CD8-positive, alpha-beta T cell (primary cell): ENCODE measurements at regions of chr12 and their contacts with region 1.

Region 1: DNA sequence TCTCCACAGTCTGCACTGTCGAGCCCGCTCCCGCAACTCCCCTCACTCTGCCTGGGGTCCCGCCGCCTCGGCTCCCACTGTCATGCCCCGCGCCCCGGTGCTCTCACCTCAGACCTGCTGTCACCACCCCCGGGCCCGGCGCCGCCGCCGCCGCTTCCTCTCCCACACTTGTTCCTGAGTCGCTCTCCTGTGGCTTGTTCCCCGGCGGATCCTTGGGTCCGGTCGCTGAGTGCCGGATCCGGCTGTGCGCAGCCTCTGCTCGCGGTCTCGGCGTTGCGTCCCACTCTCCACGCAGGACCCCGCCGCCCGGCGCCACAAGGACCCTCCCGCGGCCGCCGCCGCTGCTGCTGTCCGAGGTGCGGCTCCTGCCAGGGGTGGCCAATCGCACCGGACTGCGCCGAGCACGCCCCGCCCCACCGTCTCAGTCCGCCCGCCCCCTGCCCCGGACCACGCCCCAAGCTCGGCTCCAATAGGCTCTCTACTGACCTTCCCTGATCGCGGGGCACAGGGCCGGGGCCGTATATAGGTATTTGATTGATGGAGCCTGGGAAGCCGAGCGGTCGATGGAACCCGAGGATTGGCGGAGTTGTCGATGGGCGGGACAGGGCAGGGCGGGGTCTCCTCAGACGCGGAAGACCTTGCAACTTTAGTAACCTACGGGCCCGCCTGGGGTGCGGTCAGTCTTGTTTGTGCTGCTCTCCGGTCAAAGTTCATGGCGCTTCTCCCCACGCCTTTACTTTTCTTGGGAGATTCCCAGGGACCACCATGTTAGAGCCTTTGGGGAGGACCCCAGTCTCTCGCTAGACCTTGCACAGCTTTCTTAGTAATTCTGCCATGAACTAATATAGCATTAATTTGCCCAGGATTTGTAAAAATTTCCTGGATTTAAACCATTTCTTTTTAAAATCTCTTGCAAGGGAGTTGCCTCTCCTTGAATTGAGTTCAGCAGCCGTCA is at the start of gene TAOK3:
- DNase-seq: peak; percentile 94 to 99 (median 96)
- ATAC-seq: peak; percentile 85
- H3K4me3 ChIP-seq: peak within 1 kb of the TSS; percentile 85 to 89
- H3K4me3 Mint-ChIP-seq: peak within 1 kb of the TSS; percentile 92
- H3K27ac ChIP-seq: peak within 1 kb of the TSS; percentile 67 to 73
- H3K27ac Mint-ChIP-seq: peak within 1 kb of the TSS; percentile 95
- H3K4me1 ChIP-seq: peaks cover 31% of the 10 kb centered on the region
- H3K4me1 Mint-ChIP-seq: peaks cover 54% of the 10 kb centered on the region
- H3K27me3 ChIP-seq: no peaks in the 10 kb centered on the region
- H3K27me3 Mint-ChIP-seq: no peaks in the 10 kb centered on the region
- CTCF ChIP-seq: no peak
- total RNA-seq, gene TAOK3: 46.5 to 47.3 TPM

Region 2: GRCh38 chr12:117190210-117190781 is 1182.5 kb before region 1 on chr12 and contains the start of gene FBXO21:
- CTCF ChIA-PET with region 1: no interaction called
- POLR2A ChIA-PET with region 1: no interaction called
- intact Hi-C with region 1: loop called in 1 of 2 experiments (anchors 5 kb)
- DNase-seq: peak; percentile 90 to 98 (median 93)
- ATAC-seq: peak; percentile 96
- H3K4me3 ChIP-seq: peak within 1 kb of the TSS; percentile 49 to 87
- H3K4me3 Mint-ChIP-seq: peak within 1 kb of the TSS; percentile 93
- H3K27ac ChIP-seq: peak within 1 kb of the TSS; percentile 69 to 83
- H3K27ac Mint-ChIP-seq: peak within 1 kb of the TSS; percentile 92
- H3K4me1 ChIP-seq: peaks cover 22% of the 10 kb centered on the region
- H3K4me1 Mint-ChIP-seq: peaks cover 31% of the 10 kb centered on the region
- H3K27me3 ChIP-seq: no peaks in the 10 kb centered on the region
- H3K27me3 Mint-ChIP-seq: no peaks in the 10 kb centered on the region
- CTCF ChIP-seq: no peak
- total RNA-seq, gene FBXO21: 77.7 to 87.7 TPM

Region 3: DNA sequence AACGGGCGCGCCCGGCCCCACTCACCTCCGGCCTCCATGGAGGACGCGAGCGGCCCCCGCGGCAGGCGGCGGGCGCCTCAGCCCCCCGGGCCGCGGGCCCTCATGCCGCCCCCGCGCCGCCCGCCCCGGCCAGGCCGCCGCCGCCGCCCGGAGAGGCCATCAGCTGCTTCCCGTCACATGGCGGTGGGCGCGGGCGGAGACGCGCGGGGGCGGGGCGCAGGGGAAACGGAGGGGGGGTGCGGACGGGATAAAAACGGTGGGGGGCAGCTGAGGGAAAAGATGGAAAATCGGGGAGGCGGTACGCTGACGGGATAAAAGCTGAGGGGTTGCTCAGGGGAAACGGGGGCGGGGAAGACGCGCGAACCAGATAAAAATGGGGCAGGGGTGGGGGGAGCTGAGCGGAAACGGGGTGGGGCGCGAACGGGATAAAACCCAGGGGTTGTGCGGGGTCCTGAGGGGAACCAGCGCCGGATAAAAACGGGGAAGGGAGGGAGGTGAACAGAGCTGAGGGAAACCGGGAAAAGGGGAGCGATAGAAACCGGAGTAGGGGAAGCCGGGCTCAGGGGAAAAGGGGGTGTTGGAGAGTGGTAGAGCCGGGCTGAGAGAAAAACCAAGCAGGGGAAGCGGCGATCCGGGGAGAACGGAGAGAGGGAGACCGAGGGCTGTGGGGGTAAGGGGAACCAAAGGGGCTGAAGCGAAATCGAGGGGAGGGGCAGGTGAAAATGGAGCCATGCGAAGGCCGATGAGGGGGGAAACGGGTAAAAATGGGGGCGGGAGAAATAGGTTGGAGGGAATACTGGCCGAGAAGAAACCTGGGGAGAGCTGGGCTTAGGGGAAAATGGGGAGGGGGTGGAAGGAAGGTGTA is 311.6 kb before region 1 on chr12 and contains the start of gene WSB2:
- CTCF ChIA-PET with region 1: interaction called, 10 read pairs
- POLR2A ChIA-PET with region 1: interaction called, 6 read pairs
- intact Hi-C with region 1: loop called (anchors 1 to 2 kb)
- DNase-seq: peak; percentile 5 to 69 (median 50)
- ATAC-seq: peak; percentile 43
- H3K4me3 ChIP-seq: peak within 1 kb of the TSS; percentile 72 to 86
- H3K4me3 Mint-ChIP-seq: peak within 1 kb of the TSS; percentile 93
- H3K27ac ChIP-seq: peak within 1 kb of the TSS; percentile 67 to 92
- H3K27ac Mint-ChIP-seq: peak within 1 kb of the TSS; percentile 98
- H3K4me1 ChIP-seq: peaks cover 40% of the 10 kb centered on the region
- H3K4me1 Mint-ChIP-seq: peaks cover 57% of the 10 kb centered on the region
- H3K27me3 ChIP-seq: peaks cover 0 to 2% of the 10 kb centered on the region in 2 experiments
- H3K27me3 Mint-ChIP-seq: no peaks in the 10 kb centered on the region
- CTCF ChIP-seq: no peak
- total RNA-seq, gene WSB2: 16.4 to 19.5 TPM

Region 4: DNA sequence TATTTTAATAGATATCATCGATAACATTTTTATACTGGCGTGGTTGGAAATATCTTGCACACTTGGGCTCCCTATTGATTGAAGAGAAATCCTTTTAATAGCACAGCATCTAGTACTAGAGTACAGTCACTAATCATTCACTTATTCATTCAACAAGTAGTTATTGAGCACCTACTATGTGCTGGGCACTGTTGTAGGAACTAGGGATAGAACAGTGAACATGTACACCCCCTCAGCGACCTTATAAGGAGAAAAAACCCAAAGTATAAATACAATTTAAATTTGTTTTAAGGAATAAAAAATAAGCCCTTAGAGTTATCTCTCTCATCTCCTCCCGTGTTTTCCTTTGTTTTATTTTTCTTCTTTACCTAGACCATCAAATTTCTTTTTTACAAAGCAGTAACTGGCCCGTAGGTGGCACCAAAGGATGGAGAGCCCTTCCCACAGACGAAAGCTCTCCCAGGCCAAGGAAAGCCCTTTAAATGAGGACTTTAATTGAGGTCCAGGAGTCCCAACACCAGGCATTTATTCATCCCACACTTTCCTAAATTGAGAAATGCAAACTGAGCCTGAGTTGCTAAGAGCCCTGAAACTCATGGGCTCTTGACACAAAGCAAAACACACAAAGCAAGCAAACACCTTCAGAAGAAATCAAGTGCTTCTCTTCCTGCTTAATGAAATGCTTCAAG is 207.9 kb before region 1 on chr12:
- CTCF ChIA-PET with region 1: interaction called, 13 read pairs
- POLR2A ChIA-PET with region 1: no interaction called
- intact Hi-C with region 1: no loop called
- DNase-seq: no peak
- ATAC-seq: no peak
- H3K4me3 ChIP-seq: no peak overlapping the region
- H3K4me3 Mint-ChIP-seq: no peak overlapping the region
- H3K27ac ChIP-seq: no peak overlapping the region
- H3K27ac Mint-ChIP-seq: no peak overlapping the region
- H3K4me1 ChIP-seq: no peaks in the 10 kb centered on the region
- H3K4me1 Mint-ChIP-seq: peaks cover 4% of the 10 kb centered on the region
- H3K27me3 ChIP-seq: no peaks in the 10 kb centered on the region
- H3K27me3 Mint-ChIP-seq: no peaks in the 10 kb centered on the region
- CTCF ChIP-seq: no peak

Region 5: GRCh38 chr12:118346895-118347294 is 25.9 kb before region 1 on chr12:
- CTCF ChIA-PET with region 1: interaction called, 13 read pairs
- POLR2A ChIA-PET with region 1: no interaction called
- intact Hi-C with region 1: no loop called
- DNase-seq: peak in 1 of 9 experiments; percentile 5
- ATAC-seq: no peak
- H3K4me3 ChIP-seq: no peak overlapping the region
- H3K4me3 Mint-ChIP-seq: no peak overlapping the region
- H3K27ac ChIP-seq: no peak overlapping the region
- H3K27ac Mint-ChIP-seq: peak overlapping the region; percentile 69
- H3K4me1 ChIP-seq: peaks cover 15% of the 10 kb centered on the region
- H3K4me1 Mint-ChIP-seq: peaks cover 52% of the 10 kb centered on the region
- H3K27me3 ChIP-seq: no peaks in the 10 kb centered on the region
- H3K27me3 Mint-ChIP-seq: no peaks in the 10 kb centered on the region
- CTCF ChIP-seq: no peak

Region 6: DNA sequence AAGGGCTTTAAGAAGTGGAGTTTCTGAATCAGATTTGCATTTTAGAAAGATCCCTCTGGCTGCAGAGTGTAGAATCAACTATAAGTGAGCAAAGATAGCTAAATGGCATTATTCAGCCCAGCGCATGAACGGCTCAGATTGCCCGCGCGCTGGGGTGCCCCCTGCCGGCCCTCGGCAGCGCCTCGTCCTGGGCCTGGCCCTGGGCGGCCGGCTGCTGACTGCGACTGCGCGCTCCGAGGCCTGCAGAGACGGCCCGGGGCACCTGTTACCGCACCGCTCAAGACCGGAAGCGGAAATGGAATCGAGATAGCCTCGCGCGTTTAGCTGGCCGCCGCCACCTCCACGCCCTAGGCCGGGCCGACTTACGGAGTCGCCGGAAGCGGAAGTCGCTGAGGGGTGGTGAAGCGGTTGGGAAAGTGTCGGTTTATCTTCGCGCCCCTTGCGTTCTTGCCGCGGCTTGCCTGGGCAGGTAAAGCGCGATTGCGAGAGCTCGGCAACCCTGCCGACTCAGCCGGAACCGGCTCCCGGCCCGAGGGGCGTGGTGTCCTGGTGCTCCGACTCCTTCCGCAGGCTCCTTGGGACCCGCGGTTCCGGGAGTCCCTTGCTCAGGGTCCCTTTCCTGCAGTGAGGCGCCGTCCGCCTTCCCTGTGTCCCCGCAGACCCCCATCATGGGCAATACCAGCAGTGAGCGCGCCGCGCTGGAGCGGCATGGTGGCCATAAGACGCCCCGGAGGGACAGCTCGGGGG is 1294.9 kb after region 1 on chr12 and contains the start of gene PRKAB1:
- CTCF ChIA-PET with region 1: no interaction called
- POLR2A ChIA-PET with region 1: interaction called, 3 read pairs
- intact Hi-C with region 1: loop called (anchors 2 kb)
- DNase-seq: peak; percentile 89 to 99 (median 94)
- ATAC-seq: peak; percentile 90
- H3K4me3 ChIP-seq: peak within 1 kb of the TSS; percentile 96 to 97
- H3K4me3 Mint-ChIP-seq: peak within 1 kb of the TSS; percentile 87
- H3K27ac ChIP-seq: peak within 1 kb of the TSS; percentile 75 to 88
- H3K27ac Mint-ChIP-seq: peak within 1 kb of the TSS; percentile 90
- H3K4me1 ChIP-seq: peaks cover 36% of the 10 kb centered on the region
- H3K4me1 Mint-ChIP-seq: peaks cover 59% of the 10 kb centered on the region
- H3K27me3 ChIP-seq: no peaks in the 10 kb centered on the region
- H3K27me3 Mint-ChIP-seq: no peaks in the 10 kb centered on the region
- CTCF ChIP-seq: peak; percentile 94
- total RNA-seq, gene PRKAB1: 17.9 to 23.7 TPM